GM12878 (cell line): ENCODE measurements at regions of chr2 and their contacts with region 1.

Region 1: DNA sequence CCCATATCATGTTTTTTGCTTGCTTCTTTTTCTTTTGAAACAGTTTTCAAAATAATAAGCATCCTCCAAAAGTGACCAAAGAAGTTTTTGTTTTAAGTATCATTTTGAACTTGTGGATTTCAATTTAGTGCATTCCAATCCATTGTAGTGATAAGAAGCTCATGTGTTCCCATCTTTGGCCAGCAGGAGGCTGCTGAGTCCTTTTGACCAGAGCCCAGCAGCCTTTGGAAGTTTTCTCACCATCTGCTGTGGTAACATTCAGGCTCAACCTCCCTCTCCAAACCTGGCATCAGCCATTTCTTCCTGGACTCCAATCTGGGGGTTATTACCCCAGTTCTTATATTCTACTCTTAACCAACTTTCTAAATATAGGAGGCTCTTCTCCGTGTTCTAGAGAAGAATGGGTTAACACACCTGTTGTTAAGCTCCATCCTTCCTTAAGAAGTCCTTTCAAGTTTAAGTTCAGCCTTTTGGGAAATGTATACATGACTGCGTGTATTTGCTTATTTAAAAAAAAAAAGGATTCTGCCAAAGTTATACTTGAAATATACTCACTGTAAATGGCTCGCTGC is 39.0 kb upstream of the MAL start:
- DNase-seq: peak; percentile 2
- ATAC-seq: peak; percentile 94
- H3K4me3 ChIP-seq: no peak overlapping the region
- H3K27ac ChIP-seq: no peak overlapping the region
- H3K4me1 ChIP-seq: no peaks in the 10 kb centered on the region
- H3K27me3 ChIP-seq: no peaks in the 10 kb centered on the region; a peak in 1 of 4 replicates
- CTCF ChIP-seq: peak; percentile 69 to 80 (median 75)
- EP300 ChIP-seq: no peak
- POLR2A ChIP-seq: no peak
- RAD21 ChIP-seq: peak; percentile 60

Region 2: DNA sequence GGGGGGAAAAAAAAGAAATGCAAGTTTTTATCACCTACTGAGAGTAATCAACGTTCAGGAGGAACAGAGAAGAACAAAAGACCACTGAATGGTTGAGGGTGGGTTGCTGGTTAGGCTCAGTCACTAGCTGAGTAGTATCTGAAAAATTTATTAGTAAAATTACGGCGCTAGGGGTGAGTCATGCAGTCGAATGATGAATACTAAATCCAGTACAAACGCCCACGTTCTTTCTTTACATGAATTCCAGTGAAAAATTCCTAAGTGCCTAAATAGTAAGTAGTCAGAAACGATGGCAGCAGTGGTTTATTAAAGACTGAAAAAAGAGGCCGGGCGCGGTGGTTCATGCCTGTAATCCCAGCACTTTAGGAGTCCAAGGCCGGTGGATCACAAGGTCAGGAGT is 63.3 kb before region 1 on chr2:
- CTCF ChIA-PET with region 1: no interaction called
- POLR2A ChIA-PET with region 1: no interaction called
- RAD21 ChIA-PET with region 1: no interaction called
- SMC1A ChIA-PET with region 1: no interaction called
- in situ Hi-C with region 1: no loop called
- intact Hi-C with region 1: no loop called
- DNase-seq: no peak
- ATAC-seq: no peak
- H3K4me3 ChIP-seq: no peak overlapping the region
- H3K27ac ChIP-seq: no peak overlapping the region
- H3K4me1 ChIP-seq: no peaks in the 10 kb centered on the region
- H3K27me3 ChIP-seq: no peaks in the 10 kb centered on the region
- CTCF ChIP-seq: no peak
- EP300 ChIP-seq: no peak
- POLR2A ChIP-seq: no peak
- RAD21 ChIP-seq: no peak

Region 3: DNA sequence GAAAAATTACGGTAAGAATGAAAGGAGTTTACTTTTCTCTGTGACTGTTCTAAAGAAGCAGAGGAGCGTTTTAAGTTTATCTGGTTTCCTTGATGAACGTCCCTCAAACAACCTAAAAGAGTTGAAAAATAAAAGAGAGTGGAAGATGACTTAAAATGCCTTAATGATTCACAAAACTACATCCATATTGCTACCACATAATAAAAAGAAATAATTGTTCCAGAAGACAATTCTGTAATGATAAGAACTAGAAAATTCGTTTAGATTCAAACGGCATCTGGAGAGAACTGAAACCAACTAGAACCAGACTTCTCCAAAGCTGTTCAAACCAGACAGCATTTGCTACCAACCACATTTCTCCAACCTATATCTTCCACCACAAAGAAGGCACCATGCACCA is 47.1 kb before region 1 on chr2:
- CTCF ChIA-PET with region 1: no interaction called
- POLR2A ChIA-PET with region 1: no interaction called
- RAD21 ChIA-PET with region 1: no interaction called
- SMC1A ChIA-PET with region 1: no interaction called
- in situ Hi-C with region 1: no loop called
- intact Hi-C with region 1: no loop called
- DNase-seq: no peak
- ATAC-seq: no peak
- H3K4me3 ChIP-seq: no peak overlapping the region
- H3K27ac ChIP-seq: no peak overlapping the region
- H3K4me1 ChIP-seq: no peaks in the 10 kb centered on the region
- H3K27me3 ChIP-seq: no peaks in the 10 kb centered on the region
- CTCF ChIP-seq: no peak
- EP300 ChIP-seq: no peak
- POLR2A ChIP-seq: no peak
- RAD21 ChIP-seq: no peak

Region 4: DNA sequence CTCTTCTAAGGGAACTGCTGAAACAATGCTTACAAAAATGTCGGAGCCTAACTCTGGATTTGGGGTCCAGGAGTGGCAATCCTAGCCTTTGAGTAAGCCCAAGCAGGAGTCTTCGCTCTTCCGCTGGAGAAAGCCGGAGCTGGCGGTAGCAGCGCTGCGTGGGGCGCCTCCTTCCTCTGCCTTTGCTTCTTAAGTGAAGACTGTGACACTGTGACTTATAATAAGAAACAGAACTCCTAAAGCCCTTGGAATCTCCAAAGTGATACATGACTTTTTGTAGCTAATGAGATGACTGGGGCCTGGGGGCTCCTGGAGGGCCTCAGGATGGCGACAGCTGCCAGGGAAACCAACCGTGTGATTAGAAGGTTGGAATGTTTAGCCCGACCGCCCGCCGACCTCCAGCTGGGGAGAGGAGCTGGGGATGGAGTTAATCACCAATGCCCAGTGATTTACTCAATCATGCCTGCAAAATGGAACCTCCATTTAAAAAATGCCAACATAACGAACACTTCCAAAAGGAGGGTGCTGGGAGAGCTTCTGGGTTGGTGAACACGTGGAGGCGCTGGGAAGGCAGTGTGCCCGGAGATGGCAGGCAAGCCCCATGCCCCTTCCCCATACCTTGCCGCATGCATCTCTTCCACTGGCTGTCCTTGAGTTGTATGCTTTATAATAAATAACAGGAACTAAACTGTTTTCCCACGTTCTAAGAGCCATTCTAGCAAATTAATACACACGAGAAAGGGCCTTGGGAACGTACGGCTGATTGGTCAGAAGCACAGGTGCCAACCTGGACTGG is 10.0 kb after region 1 on chr2:
- CTCF ChIA-PET with region 1: interaction called, 10 read pairs
- POLR2A ChIA-PET with region 1: no interaction called
- RAD21 ChIA-PET with region 1: interaction called, 4 read pairs
- SMC1A ChIA-PET with region 1: no interaction called
- in situ Hi-C with region 1: no loop called
- intact Hi-C with region 1: no loop called
- DNase-seq: no peak
- ATAC-seq: no peak
- H3K4me3 ChIP-seq: no peak overlapping the region
- H3K27ac ChIP-seq: no peak overlapping the region
- H3K4me1 ChIP-seq: no peaks in the 10 kb centered on the region
- H3K27me3 ChIP-seq: peaks cover 0 to 2% of the 10 kb centered on the region in 2 experiments; a peak in 3 of 4 replicates
- CTCF ChIP-seq: no peak
- EP300 ChIP-seq: no peak
- POLR2A ChIP-seq: no peak
- RAD21 ChIP-seq: no peak

Region 5: DNA sequence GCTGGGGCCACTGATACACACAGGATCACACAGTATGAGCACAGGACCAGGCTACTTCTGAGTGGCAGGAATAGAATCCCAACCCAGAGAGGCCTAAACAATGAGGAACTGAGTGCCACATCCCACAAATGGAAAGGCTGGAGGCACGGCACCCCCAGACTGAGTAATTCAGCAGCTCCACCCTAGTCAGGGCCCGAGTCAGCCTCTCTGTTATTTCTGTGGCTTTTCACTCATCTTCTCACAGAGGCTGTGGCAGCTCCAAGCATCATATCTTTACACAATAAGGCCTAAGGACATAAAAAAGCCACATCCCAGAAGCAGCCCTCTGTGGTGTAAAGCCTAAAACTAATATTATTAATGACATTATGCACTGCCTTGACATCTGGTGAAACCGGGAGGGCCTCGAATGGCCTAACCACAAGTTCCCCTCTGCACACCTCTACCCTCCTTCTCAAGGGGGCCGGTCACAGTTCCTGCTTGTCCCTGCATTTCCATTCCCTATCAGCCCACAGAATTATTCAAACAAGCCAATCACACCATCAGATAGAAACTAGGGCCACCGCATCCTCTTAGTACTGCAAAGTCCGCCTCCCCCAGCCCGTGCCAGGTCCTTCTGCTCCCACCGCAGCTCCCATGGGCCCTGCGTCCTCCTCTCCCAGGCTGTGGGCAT is 26.5 kb after region 1 on chr2:
- CTCF ChIA-PET with region 1: interaction called, 6 read pairs
- POLR2A ChIA-PET with region 1: no interaction called
- RAD21 ChIA-PET with region 1: interaction called, 3 read pairs
- SMC1A ChIA-PET with region 1: interaction called, 4 read pairs
- in situ Hi-C with region 1: no loop called
- intact Hi-C with region 1: loop called (anchors 2 kb)
- DNase-seq: peak; percentile 57
- ATAC-seq: peak; percentile 88
- H3K4me3 ChIP-seq: no peak overlapping the region
- H3K27ac ChIP-seq: peak overlapping the region; percentile 27; the same call in 1 of the 2 replicates
- H3K4me1 ChIP-seq: peaks cover 29% of the 10 kb centered on the region
- H3K27me3 ChIP-seq: no peaks in the 10 kb centered on the region
- CTCF ChIP-seq: no peak
- EP300 ChIP-seq: no peak
- POLR2A ChIP-seq: no peak
- RAD21 ChIP-seq: no peak

Region 6: GRCh38 chr2:95053543-95053942 is 67.1 kb after region 1 on chr2:
- CTCF ChIA-PET with region 1: interaction called, 11 read pairs
- POLR2A ChIA-PET with region 1: no interaction called
- RAD21 ChIA-PET with region 1: interaction called, 5 read pairs
- SMC1A ChIA-PET with region 1: interaction called, 7 read pairs
- in situ Hi-C with region 1: no loop called
- intact Hi-C with region 1: no loop called
- DNase-seq: no peak
- ATAC-seq: peak; percentile 25; the same call in 2 of the 3 replicates
- H3K4me3 ChIP-seq: no peak overlapping the region
- H3K27ac ChIP-seq: no peak overlapping the region
- H3K4me1 ChIP-seq: peaks cover 26% of the 10 kb centered on the region
- H3K27me3 ChIP-seq: no peaks in the 10 kb centered on the region
- CTCF ChIP-seq: peak; percentile 23 to 54 (median 35); a peak in 4 of 6 replicates
- EP300 ChIP-seq: no peak
- POLR2A ChIP-seq: no peak
- RAD21 ChIP-seq: peak; percentile 72

Region 7: DNA sequence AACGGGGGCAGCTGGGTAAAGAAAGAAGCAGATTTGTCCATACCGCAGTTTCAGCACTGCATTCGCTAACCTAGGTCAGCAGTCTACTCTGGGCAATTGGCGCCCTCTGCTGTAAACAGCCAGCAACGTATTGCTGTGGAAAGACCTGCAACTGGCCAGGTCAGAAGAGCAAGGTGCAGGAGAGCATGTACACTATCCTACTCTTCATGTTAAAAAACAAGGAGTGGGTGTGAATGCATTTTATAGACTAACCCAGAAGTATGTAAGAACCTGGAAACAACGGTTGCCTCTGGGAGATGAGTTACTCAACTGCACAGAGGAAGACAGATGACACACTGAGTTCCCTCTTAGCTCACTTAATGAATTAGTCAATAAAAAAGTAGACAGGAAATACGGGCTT is 128.9 kb after region 1 on chr2:
- CTCF ChIA-PET with region 1: interaction called, 18 read pairs
- POLR2A ChIA-PET with region 1: no interaction called
- RAD21 ChIA-PET with region 1: interaction called, 8 read pairs
- SMC1A ChIA-PET with region 1: interaction called, 4 read pairs
- in situ Hi-C with region 1: no loop called
- intact Hi-C with region 1: loop called (anchors 1 kb)
- DNase-seq: peak; percentile 25
- ATAC-seq: peak; percentile 95
- H3K4me3 ChIP-seq: no peak overlapping the region
- H3K27ac ChIP-seq: no peak overlapping the region
- H3K4me1 ChIP-seq: peaks cover 15% of the 10 kb centered on the region
- H3K27me3 ChIP-seq: no peaks in the 10 kb centered on the region
- CTCF ChIP-seq: peak; percentile 77 to 90 (median 83)
- EP300 ChIP-seq: no peak
- POLR2A ChIP-seq: no peak
- RAD21 ChIP-seq: peak; percentile 82

Region 8: GRCh38 chr2:96213379-96213778 is 1226.9 kb after region 1 on chr2:
- CTCF ChIA-PET with region 1: no interaction called
- POLR2A ChIA-PET with region 1: no interaction called
- RAD21 ChIA-PET with region 1: no interaction called
- SMC1A ChIA-PET with region 1: no interaction called
- in situ Hi-C with region 1: no loop called
- intact Hi-C with region 1: no loop called
- DNase-seq: no peak
- ATAC-seq: no peak
- H3K4me3 ChIP-seq: no peak overlapping the region
- H3K27ac ChIP-seq: no peak overlapping the region
- H3K4me1 ChIP-seq: peaks cover 22% of the 10 kb centered on the region
- H3K27me3 ChIP-seq: no peaks in the 10 kb centered on the region
- CTCF ChIP-seq: no peak
- EP300 ChIP-seq: no peak
- POLR2A ChIP-seq: no peak
- RAD21 ChIP-seq: no peak